ENCODE measurements at regions of chr1 and their contacts with region 1.

Region 1: GRCh38 chr1:197146197-197146889 is at the start of gene ASPM:
- DNase-seq: peak; percentile 99
- H3K4me3 Mint-ChIP-seq: peak within 1 kb of the TSS; percentile 87
- H3K27ac Mint-ChIP-seq: peak within 1 kb of the TSS; percentile 89
- H3K4me1 Mint-ChIP-seq: peaks cover 23% of the 10 kb centered on the region
- H3K27me3 Mint-ChIP-seq: no peaks in the 10 kb centered on the region
- CTCF ChIP-seq: no peak
- total RNA-seq, gene ASPM: 22.3 and 32.8 TPM in 2 replicates

Region 2: GRCh38 chr1:196738730-196739129 is 407.6 kb before region 1 on chr1:
- CTCF ChIA-PET with region 1: interaction called, 3 read pairs
- POLR2A ChIA-PET with region 1: no interaction called
- intact Hi-C with region 1: loop called (anchors 10 kb)
- DNase-seq: no peak
- H3K4me3 Mint-ChIP-seq: no peak overlapping the region
- H3K27ac Mint-ChIP-seq: no peak overlapping the region
- H3K4me1 Mint-ChIP-seq: peaks cover 6% of the 10 kb centered on the region
- H3K27me3 Mint-ChIP-seq: no peaks in the 10 kb centered on the region
- CTCF ChIP-seq: no peak

Region 3: DNA sequence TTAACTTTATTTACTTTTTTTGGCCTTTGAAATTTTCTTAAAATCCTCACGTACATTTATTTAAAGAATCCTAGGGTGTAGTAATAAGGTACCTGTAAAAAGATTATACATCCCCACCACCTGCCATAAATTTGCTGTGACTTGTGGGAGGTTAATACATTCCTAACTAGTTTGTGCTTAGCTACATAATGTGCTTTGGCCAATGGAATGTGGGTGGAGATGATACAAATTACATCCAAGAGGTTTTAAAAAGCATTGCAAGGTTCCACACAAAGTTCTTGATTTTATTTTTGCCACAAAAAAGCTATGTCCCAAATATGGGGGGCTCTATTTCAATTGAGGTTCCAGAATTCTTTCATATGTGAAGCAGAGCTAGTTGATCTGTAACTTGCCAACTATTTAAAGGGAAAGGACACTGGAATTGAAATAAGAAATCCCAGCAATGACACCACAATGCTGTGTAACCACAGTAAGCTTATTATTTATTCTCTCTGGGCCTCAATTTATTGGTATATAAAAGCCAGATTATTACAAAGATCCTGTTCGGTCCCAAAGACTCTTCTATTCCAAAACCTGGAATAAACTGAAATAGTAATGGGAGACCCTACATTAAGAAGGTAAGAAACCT is 15.6 kb before region 1 on chr1:
- CTCF ChIA-PET with region 1: interaction called, 7 read pairs
- POLR2A ChIA-PET with region 1: interaction called, 73 read pairs
- intact Hi-C with region 1: no loop called
- DNase-seq: no peak
- H3K4me3 Mint-ChIP-seq: peak overlapping the region; percentile 54
- H3K27ac Mint-ChIP-seq: peak overlapping the region; percentile 84
- H3K4me1 Mint-ChIP-seq: peaks cover 39% of the 10 kb centered on the region
- H3K27me3 Mint-ChIP-seq: no peaks in the 10 kb centered on the region
- CTCF ChIP-seq: no peak

Region 4: GRCh38 chr1:197210426-197210825 is 64.1 kb after region 1 on chr1:
- CTCF ChIA-PET with region 1: no interaction called
- POLR2A ChIA-PET with region 1: no interaction called
- intact Hi-C with region 1: no loop called
- DNase-seq: no peak
- H3K4me3 Mint-ChIP-seq: no peak overlapping the region
- H3K27ac Mint-ChIP-seq: no peak overlapping the region
- H3K4me1 Mint-ChIP-seq: no peaks in the 10 kb centered on the region
- H3K27me3 Mint-ChIP-seq: no peaks in the 10 kb centered on the region
- CTCF ChIP-seq: no peak

Region 5: DNA sequence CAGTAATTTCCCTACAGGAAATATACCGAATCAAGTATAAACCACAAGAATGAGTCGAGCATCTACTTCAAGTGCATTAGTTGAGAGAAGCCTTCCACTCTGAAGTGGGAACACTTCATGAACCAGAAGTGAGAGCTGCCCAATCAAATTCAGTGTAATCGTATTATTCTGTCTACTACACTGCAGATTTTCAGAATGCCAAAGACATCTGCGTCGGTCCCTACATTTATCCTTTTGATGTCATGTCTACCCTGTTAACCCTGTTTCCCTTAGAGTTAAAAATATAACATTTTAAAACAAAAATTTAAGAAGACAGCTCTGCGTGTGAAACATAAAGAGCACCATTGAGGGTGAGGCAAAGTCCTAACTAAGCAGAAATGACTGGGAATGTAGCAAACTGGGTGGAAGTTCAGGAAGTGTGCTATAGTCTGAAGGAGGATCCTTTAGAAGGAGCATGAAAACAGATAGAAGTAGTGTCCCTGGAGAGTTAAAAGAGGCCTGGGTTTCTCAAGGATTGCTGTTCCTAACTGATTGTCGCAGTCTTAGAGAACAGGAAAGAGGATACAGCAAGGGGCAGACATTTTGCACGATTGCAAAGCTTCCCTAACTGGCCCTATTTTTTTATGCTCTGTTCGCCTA is 1783.7 kb after region 1 on chr1:
- CTCF ChIA-PET with region 1: no interaction called
- POLR2A ChIA-PET with region 1: interaction called, 14 read pairs
- intact Hi-C with region 1: no loop called
- DNase-seq: peak; percentile 78
- H3K4me3 Mint-ChIP-seq: peak overlapping the region; percentile 70
- H3K27ac Mint-ChIP-seq: peak overlapping the region; percentile 98
- H3K4me1 Mint-ChIP-seq: peaks cover 27% of the 10 kb centered on the region
- H3K27me3 Mint-ChIP-seq: no peaks in the 10 kb centered on the region
- CTCF ChIP-seq: no peak